ENCODE measurements at regions of chr3 and their contacts with region 1.

Region 1: DNA sequence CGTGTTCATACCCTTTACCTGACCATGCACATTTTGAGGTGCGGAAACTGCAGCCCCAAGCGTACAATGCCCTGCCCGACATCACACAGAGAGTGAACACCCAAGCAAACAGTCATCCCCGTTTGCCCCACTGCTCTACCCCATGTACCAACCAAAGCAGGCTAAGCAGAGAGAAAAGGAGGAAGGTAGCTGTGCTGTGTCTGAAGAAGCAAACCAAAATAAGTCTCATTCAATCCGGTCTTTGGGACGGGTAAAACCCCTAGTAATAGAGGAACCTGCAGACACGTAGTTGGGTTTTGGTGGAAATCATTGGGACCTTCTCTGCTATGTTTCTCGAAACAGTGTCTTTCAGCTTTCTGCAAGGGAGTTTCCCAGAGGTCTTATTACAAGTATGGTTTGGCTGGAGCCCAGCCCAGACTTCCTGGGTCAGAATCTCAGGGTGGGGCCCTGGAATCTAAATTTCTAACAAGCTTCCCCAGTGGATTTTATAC is 164.6 kb upstream of the HES1 start:
- DNase-seq: peak; percentile 81
- H3K4me3 ChIP-seq: no peak overlapping the region
- H3K27ac ChIP-seq: peak overlapping the region; percentile 60 to 74 (median 68)
- H3K4me1 ChIP-seq: peaks cover 4 to 40% (median 19%) of the 10 kb centered on the region in 4 donors
- H3K27me3 ChIP-seq: no peaks in the 10 kb centered on the region
- CTCF ChIP-seq: no peak
- EP300 ChIP-seq: no peak
- POLR2A ChIP-seq: no peak

Region 2: GRCh38 chr3:193788189-193788991 is 182.9 kb before region 1 on chr3:
- in situ Hi-C with region 1: loop called in 2 of 4 experiments (anchors 25 kb)
- intact Hi-C with region 1: no loop called
- DNase-seq: peak; percentile 54
- H3K4me3 ChIP-seq: no peak overlapping the region
- H3K27ac ChIP-seq: peak overlapping the region in 3 of 4 donors; percentile 18 to 44 (median 25)
- H3K4me1 ChIP-seq: peaks cover 0 to 23% (median 13%) of the 10 kb centered on the region in 4 donors
- H3K27me3 ChIP-seq: no peaks in the 10 kb centered on the region
- CTCF ChIP-seq: peak; percentile 69 to 86 (median 75)
- EP300 ChIP-seq: no peak
- POLR2A ChIP-seq: no peak

Region 3: DNA sequence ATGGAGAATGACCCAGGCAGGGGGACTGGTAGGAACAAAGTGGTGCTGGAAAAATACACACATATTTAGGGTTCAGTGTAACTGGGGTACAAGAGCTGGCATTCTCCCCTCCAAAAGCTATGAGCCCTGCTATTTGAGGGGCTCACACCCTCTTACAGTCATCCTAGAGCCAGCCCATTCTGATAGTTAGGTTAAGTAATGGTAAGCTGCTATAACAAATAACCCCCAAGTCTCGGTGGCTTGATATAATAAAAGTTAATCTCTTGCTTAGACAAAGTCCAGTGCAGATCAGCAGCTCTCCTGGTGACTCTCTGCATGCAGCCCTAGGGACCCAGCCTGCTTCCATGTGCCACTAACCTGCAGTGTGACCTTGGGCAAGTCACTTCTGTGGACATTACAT is 70.3 kb before region 1 on chr3:
- in situ Hi-C with region 1: no loop called
- intact Hi-C with region 1: loop called (anchors 2 kb)
- DNase-seq: no peak
- H3K4me3 ChIP-seq: no peak overlapping the region
- H3K27ac ChIP-seq: no peak overlapping the region
- H3K4me1 ChIP-seq: no peaks in the 10 kb centered on the region
- H3K27me3 ChIP-seq: no peaks in the 10 kb centered on the region
- CTCF ChIP-seq: no peak
- EP300 ChIP-seq: no peak
- POLR2A ChIP-seq: no peak

Measured in transverse colon (tissue), 4 donors.